ENCODE measurements at regions of chr14 and their contacts with region 1.

Region 1: GRCh38 chr14:78933948-78934524 is 763.9 kb downstream of the NRXN3 start:
- DNase-seq: peak; percentile 31 to 42
- ATAC-seq: peak in 1 of 2 experiments; percentile 54; a peak in 4 of 6 replicates
- H3K4me3 ChIP-seq: no peak overlapping the region
- H3K27ac ChIP-seq: no peak overlapping the region
- H3K4me1 ChIP-seq: no peaks in the 10 kb centered on the region
- CTCF ChIP-seq: peak; percentile 68
- EP300 ChIP-seq: no peak
- POLR2A ChIP-seq: no peak
- RAD21 ChIP-seq: peak; percentile 68 to 78

Region 2: GRCh38 chr14:78950649-78951048 is 16.6 kb after region 1 on chr14:
- CTCF ChIA-PET with region 1: interaction called, 11 read pairs
- POLR2A ChIA-PET with region 1: no interaction called
- DNase-seq: peak in 1 of 2 experiments; percentile 7
- ATAC-seq: no peak
- H3K4me3 ChIP-seq: no peak overlapping the region
- H3K27ac ChIP-seq: no peak overlapping the region
- H3K4me1 ChIP-seq: peaks cover 6% of the 10 kb centered on the region; the same call in 1 of the 3 replicates
- CTCF ChIP-seq: no peak
- EP300 ChIP-seq: no peak
- POLR2A ChIP-seq: no peak
- RAD21 ChIP-seq: no peak

Region 3: DNA sequence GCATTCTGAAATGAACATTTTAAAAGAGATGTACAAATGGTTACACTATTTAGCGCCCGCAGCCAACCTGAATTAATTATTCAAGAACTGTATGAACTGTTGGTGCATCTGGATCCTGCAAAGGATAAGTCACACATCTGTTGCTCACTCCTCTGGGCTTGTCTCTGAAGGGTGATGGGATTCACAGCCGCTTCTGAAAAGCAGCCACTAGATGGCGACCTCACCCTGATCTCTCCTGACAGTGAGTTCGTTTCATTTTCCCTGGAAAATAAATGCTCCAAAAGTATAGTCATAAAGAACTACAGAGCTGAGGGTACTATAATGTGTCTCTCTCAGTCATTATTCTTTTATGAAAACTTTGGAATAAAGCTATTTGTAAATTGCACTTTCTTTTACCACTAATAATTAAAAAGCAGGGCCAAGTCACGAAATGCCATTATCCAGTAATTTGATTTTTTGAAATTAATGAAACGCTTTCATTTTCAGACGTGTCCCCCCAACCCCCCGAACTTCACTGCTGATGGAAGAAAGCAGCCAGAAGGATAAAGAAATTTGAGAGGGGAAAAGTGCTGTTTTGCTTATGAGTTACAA is 25.7 kb after region 1 on chr14:
- CTCF ChIA-PET with region 1: interaction called, 13 read pairs
- POLR2A ChIA-PET with region 1: no interaction called
- DNase-seq: peak; percentile 58 to 61
- ATAC-seq: peak; percentile 87 to 93
- H3K4me3 ChIP-seq: no peak overlapping the region
- H3K27ac ChIP-seq: no peak overlapping the region
- H3K4me1 ChIP-seq: no peaks in the 10 kb centered on the region
- CTCF ChIP-seq: peak; percentile 85
- EP300 ChIP-seq: no peak
- POLR2A ChIP-seq: no peak
- RAD21 ChIP-seq: peak; percentile 73 to 79

Region 4: GRCh38 chr14:79442786-79443185 is 508.8 kb after region 1 on chr14:
- CTCF ChIA-PET with region 1: no interaction called
- POLR2A ChIA-PET with region 1: no interaction called
- DNase-seq: no peak
- ATAC-seq: no peak
- H3K4me3 ChIP-seq: no peak overlapping the region
- H3K27ac ChIP-seq: no peak overlapping the region
- H3K4me1 ChIP-seq: 0 out of 3 replicates have a peak, but pooled peaks cover under 1% of the 10 kb centered on the region
- CTCF ChIP-seq: no peak
- EP300 ChIP-seq: no peak
- POLR2A ChIP-seq: no peak
- RAD21 ChIP-seq: no peak

Measured in A549 (cell line).